Mammary epithelial cell (primary cell): ENCODE measurements at regions of chr3 and their contacts with region 1.

Region 1: GRCh38 chr3:101849051-101849720 is at the start of gene NFKBIZ:
- DNase-seq: peak; percentile 94
- H3K4me3 ChIP-seq: peak within 1 kb of the TSS; percentile 74 to 99 (median 87)
- H3K27ac ChIP-seq: peak within 1 kb of the TSS; percentile 92
- H3K4me1 ChIP-seq: peaks cover 20% of the 10 kb centered on the region
- H3K27me3 ChIP-seq: no peaks in the 10 kb centered on the region
- CTCF ChIP-seq: peak in 1 of 2 donors; percentile 15
- total RNA-seq, gene NFKBIZ: 27.0 to 85.8 TPM

Region 2: DNA sequence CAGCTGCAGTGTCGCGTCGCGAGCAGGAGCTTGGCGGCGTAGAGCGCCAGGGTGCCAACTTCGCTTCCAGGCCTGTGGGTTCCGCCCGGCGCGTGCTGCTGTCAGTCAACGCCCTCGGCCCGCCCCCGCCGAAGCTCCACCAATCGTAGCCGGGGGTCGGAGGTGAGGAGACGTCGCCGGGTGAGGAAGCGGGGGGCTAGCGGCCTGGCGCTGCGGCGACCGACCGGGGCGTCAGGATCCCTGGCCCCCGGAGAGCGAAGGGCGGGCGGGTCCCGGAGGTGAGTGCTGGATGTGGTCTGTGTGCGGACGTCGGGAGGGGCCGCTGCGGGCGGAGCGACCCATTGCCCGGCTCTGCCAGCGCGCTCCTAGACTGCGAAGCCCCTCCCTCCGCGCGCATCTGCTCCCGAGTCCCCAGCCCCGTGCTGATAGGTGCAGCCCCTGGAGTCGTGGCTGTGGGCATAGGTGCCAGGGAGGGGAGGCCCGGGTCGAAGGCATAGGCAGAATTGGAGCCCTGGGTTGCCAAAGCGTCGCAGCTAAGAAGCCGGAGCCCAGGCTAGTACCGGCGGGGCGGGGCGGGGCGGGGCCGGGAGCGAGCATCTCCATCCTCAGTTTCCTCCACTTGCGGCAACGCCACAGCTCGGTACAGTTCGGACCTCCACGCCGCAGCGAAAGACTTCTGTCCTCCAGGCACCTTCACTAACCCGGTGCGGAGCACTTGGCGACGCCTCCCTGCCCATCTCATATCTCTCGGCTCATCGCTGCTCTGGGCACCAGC is 70.0 kb before region 1 on chr3 and contains the start of gene NXPE3:
- CTCF ChIA-PET with region 1: no interaction called
- dilution Hi-C with region 1: no loop called
- in situ Hi-C with region 1: no loop called
- intact Hi-C with region 1: no loop called
- DNase-seq: peak; percentile 81
- H3K4me3 ChIP-seq: peak within 1 kb of the TSS; percentile 58 to 88 (median 65)
- H3K27ac ChIP-seq: peak within 1 kb of the TSS; percentile 37
- H3K4me1 ChIP-seq: peaks cover 23% of the 10 kb centered on the region
- H3K27me3 ChIP-seq: no peaks in the 10 kb centered on the region
- CTCF ChIP-seq: no peak
- total RNA-seq, gene NXPE3: 19.4 to 21.5 TPM

Region 3: DNA sequence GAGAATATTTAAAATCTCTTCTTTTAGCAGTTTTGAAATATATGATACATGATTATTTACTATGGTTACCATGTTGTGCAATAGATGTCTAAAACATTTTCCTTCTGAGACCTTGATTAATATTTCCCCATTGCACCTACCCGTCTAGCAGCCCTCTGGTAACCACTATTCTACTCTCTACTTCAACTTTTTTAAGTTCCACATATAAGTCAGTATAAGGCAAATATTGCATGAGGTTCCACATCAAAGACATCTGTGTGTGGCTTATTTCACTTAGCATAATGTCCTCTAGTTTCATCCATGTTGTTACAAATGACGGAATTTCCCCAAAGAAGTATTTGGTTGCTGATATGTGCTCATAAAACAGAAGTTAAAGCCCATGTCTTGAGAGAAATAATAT is 29.4 kb before region 1 on chr3:
- CTCF ChIA-PET with region 1: no interaction called
- dilution Hi-C with region 1: no loop called
- in situ Hi-C with region 1: no loop called
- intact Hi-C with region 1: loop called (anchors 2 kb)
- DNase-seq: no peak
- H3K4me3 ChIP-seq: no peak overlapping the region
- H3K27ac ChIP-seq: no peak overlapping the region
- H3K4me1 ChIP-seq: peaks cover 11% of the 10 kb centered on the region
- H3K27me3 ChIP-seq: no peaks in the 10 kb centered on the region
- CTCF ChIP-seq: no peak

Region 4: DNA sequence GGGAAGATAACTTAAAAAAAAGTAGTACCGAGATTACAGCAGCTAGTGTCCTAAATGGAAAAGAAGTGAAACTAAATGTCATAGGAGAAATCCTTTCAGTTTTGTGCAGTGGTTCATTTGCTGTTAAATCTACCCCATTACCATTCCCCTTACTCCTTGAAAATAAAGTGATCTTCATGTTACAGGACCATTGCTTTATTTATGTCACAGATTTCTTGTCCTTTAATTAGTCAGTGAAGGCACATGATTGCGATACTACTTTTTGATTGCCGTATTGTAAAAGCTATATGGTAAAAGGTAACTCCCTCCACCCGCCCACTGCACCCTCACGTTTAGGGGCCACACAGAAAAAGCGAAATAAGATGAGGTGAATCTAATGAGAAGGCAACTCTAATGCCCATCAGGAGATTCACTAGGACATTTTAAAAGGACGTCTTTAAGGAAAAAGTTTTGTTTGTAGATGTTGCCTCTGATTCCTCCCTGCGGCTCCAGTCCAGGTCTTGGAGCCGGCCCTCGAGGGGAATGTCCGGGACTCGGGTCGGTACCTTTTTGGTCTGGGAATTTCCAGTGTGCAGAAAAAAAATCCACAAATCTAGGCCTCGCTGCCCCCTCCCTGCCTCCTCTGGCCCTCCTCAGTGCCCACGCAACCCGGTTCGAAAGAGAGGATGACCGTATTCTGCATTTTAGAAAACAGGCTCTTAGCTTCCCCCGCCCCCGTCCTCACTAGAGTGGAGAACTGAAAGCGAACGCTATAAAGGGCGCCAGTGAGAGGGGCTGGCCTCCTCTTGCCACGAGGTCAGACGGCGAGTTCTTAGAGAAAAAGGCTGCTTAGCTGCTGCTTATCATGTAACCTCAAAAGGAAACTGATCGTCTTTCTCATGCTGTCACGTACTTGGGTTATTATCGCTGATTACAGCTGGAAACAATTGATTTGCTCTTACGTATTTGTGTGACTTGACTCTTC is 21.7 kb before region 1 on chr3:
- CTCF ChIA-PET with region 1: no interaction called
- dilution Hi-C with region 1: no loop called
- in situ Hi-C with region 1: no loop called
- intact Hi-C with region 1: loop called (anchors 1 kb)
- DNase-seq: peak; percentile 91
- H3K4me3 ChIP-seq: peak overlapping the region; percentile 64 to 91 (median 70)
- H3K27ac ChIP-seq: peak overlapping the region; percentile 98
- H3K4me1 ChIP-seq: peaks cover 11% of the 10 kb centered on the region
- H3K27me3 ChIP-seq: no peaks in the 10 kb centered on the region
- CTCF ChIP-seq: no peak

Region 5: GRCh38 chr3:101995371-101996046 is 146.3 kb after region 1 on chr3:
- CTCF ChIA-PET with region 1: no interaction called
- dilution Hi-C with region 1: no loop called
- in situ Hi-C with region 1: no loop called
- intact Hi-C with region 1: no loop called
- DNase-seq: no peak
- H3K4me3 ChIP-seq: no peak overlapping the region
- H3K27ac ChIP-seq: no peak overlapping the region
- H3K4me1 ChIP-seq: peaks cover 30% of the 10 kb centered on the region
- H3K27me3 ChIP-seq: no peaks in the 10 kb centered on the region
- CTCF ChIP-seq: no peak

Region 6: GRCh38 chr3:102180291-102181039 is 331.3 kb after region 1 on chr3:
- CTCF ChIA-PET with region 1: no interaction called
- dilution Hi-C with region 1: loop called (anchors 25 kb)
- in situ Hi-C with region 1: no loop called
- intact Hi-C with region 1: no loop called
- DNase-seq: no peak
- H3K4me3 ChIP-seq: peak overlapping the region in 1 of 3 experiments; percentile 13
- H3K27ac ChIP-seq: peak overlapping the region; percentile 59
- H3K4me1 ChIP-seq: peaks cover 32% of the 10 kb centered on the region
- H3K27me3 ChIP-seq: no peaks in the 10 kb centered on the region
- CTCF ChIP-seq: no peak